ENCODE measurements at regions of chr1 and their contacts with region 1.

Region 1: GRCh38 chr1:38046884-38047602 is 450 bp upstream of the POU3F1 start:
- DNase-seq: peak; percentile 91

Region 2: DNA sequence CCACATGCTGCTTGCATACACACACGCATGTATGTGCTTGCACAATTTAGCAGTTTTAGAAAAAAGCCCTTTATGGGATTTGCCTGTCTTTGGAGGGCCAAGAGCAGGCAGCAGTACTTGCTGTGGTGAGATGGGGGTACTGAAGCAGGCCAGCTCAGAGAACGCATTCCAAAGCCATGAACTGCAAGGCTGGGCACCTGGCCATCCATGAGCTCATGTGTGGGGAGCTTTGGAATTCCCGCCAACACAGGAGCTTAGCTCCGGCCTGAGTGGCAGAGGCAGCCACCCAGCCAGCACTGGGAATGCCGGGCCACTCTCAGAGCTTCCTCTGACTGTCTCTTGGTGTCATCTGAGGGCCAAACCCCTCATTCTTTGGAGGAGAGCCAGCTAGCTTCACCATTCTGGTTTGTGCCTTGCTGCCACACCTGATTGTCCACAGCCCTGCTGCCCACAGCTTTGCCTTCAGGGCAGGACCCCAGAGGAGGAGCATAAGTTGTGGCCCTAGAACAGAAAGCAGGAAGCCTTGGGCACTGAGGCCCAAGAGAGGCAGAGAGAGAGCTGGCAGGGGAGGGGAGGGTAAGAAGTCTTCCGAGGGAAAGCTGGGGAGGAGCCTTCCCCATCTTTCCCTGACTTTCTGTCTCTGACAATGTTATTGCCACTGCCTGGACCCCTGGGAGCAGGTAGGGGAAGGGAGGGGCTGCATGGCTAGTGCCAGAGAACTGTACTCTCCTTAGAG is 91.6 kb after region 1 on chr1:
- intact Hi-C with region 1: loop called (anchors 5 kb)
- DNase-seq: peak; percentile 87